CD8-positive, alpha-beta T cell (primary cell): ENCODE measurements at regions of chr6 and their contacts with region 1.

Region 1: DNA sequence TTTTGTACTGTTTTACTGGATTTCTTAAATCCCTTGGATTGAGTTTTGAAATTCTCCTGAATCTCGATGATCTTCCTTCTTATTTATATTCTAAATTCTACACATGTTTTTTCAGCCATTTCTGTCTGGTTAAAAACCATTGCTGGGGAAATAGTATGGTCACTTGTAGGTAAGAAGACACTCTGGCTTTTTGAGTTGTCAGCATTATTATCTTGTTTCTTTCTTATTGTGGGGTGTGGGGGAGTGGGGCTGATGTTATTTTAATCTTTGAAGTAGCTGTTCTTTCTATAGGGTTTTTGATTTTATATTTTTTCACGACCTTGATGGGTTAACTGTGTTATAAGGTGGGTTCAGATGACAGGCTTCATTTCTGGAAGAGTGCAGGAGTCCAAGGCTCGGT is 37.4 kb upstream of the ADGRB3 start:
- DNase-seq: no peak
- ATAC-seq: no peak
- H3K4me3 ChIP-seq: no peak overlapping the region
- H3K4me3 Mint-ChIP-seq: no peak overlapping the region
- H3K27ac ChIP-seq: no peak overlapping the region
- H3K27ac Mint-ChIP-seq: no peak overlapping the region
- H3K4me1 ChIP-seq: no peaks in the 10 kb centered on the region
- H3K4me1 Mint-ChIP-seq: no peaks in the 10 kb centered on the region
- H3K27me3 ChIP-seq: no peaks in the 10 kb centered on the region
- H3K27me3 Mint-ChIP-seq: no peaks in the 10 kb centered on the region
- CTCF ChIP-seq: no peak

Region 2: GRCh38 chr6:68559070-68559469 is 38.6 kb before region 1 on chr6:
- CTCF ChIA-PET with region 1: no interaction called
- POLR2A ChIA-PET with region 1: no interaction called
- intact Hi-C with region 1: loop called in 1 of 2 experiments (anchors 1 kb)
- DNase-seq: no peak
- ATAC-seq: no peak
- H3K4me3 ChIP-seq: no peak overlapping the region
- H3K4me3 Mint-ChIP-seq: no peak overlapping the region
- H3K27ac ChIP-seq: no peak overlapping the region
- H3K27ac Mint-ChIP-seq: no peak overlapping the region
- H3K4me1 ChIP-seq: no peaks in the 10 kb centered on the region
- H3K4me1 Mint-ChIP-seq: no peaks in the 10 kb centered on the region
- H3K27me3 ChIP-seq: no peaks in the 10 kb centered on the region
- H3K27me3 Mint-ChIP-seq: no peaks in the 10 kb centered on the region
- CTCF ChIP-seq: no peak